CD4-positive, alpha-beta T cell (primary cell): ENCODE measurements at regions of chr4 and their contacts with region 1.

Region 1: GRCh38 chr4:108148316-108148715 is 20.4 kb downstream of the LEF1 start:
- DNase-seq: peak in 6 of 14 experiments; percentile 28 to 64 (median 59)
- ATAC-seq: peak; percentile 76
- H3K4me3 ChIP-seq: no peak overlapping the region
- H3K4me3 Mint-ChIP-seq: peak overlapping the region; percentile 45
- H3K27ac ChIP-seq: peak overlapping the region; percentile 4 to 73
- H3K27ac Mint-ChIP-seq: peak overlapping the region; percentile 98
- H3K4me1 ChIP-seq: peaks cover 49% of the 10 kb centered on the region
- H3K4me1 Mint-ChIP-seq: peaks cover 93% of the 10 kb centered on the region
- H3K27me3 ChIP-seq: no peaks in the 10 kb centered on the region
- H3K27me3 Mint-ChIP-seq: no peaks in the 10 kb centered on the region
- CTCF ChIP-seq: no peak

Region 2: GRCh38 chr4:108160741-108161352 is 12.5 kb after region 1 on chr4:
- CTCF ChIA-PET with region 1: interaction called, 7 read pairs
- POLR2A ChIA-PET with region 1: interaction called, 229 read pairs
- intact Hi-C with region 1: loop called (anchors 2 kb)
- DNase-seq: peak in 3 of 14 experiments; percentile 54 to 60 (median 59)
- ATAC-seq: peak; percentile 45
- H3K4me3 ChIP-seq: peak overlapping the region; percentile 76
- H3K4me3 Mint-ChIP-seq: peak overlapping the region; percentile 87
- H3K27ac ChIP-seq: peak overlapping the region; percentile 7 to 36
- H3K27ac Mint-ChIP-seq: peak overlapping the region; percentile 79
- H3K4me1 ChIP-seq: peaks cover 22% of the 10 kb centered on the region
- H3K4me1 Mint-ChIP-seq: peaks cover 71% of the 10 kb centered on the region
- H3K27me3 ChIP-seq: no peaks in the 10 kb centered on the region
- H3K27me3 Mint-ChIP-seq: no peaks in the 10 kb centered on the region
- CTCF ChIP-seq: no peak